Left cardiac atrium (tissue), 4 donors: ENCODE measurements at regions of chr11 and their contacts with region 1.

Region 1: GRCh38 chr11:7442588-7443215 is 42.6 kb upstream of the OLFML1 start:
- DNase-seq: peak; percentile 67
- ATAC-seq: peak in 1 of 2 donors; percentile 70

Region 2: GRCh38 chr11:7098235-7098832 is 344.4 kb before region 1 on chr11:
- intact Hi-C with region 1: loop called in 1 of 2 experiments (anchors 2 kb)
- DNase-seq: no peak
- ATAC-seq: peak; percentile 41 to 52

Region 3: GRCh38 chr11:7143908-7144307 is 298.8 kb before region 1 on chr11:
- intact Hi-C with region 1: loop called (anchors 5 to 10 kb)
- DNase-seq: no peak
- ATAC-seq: no peak

Region 4: DNA sequence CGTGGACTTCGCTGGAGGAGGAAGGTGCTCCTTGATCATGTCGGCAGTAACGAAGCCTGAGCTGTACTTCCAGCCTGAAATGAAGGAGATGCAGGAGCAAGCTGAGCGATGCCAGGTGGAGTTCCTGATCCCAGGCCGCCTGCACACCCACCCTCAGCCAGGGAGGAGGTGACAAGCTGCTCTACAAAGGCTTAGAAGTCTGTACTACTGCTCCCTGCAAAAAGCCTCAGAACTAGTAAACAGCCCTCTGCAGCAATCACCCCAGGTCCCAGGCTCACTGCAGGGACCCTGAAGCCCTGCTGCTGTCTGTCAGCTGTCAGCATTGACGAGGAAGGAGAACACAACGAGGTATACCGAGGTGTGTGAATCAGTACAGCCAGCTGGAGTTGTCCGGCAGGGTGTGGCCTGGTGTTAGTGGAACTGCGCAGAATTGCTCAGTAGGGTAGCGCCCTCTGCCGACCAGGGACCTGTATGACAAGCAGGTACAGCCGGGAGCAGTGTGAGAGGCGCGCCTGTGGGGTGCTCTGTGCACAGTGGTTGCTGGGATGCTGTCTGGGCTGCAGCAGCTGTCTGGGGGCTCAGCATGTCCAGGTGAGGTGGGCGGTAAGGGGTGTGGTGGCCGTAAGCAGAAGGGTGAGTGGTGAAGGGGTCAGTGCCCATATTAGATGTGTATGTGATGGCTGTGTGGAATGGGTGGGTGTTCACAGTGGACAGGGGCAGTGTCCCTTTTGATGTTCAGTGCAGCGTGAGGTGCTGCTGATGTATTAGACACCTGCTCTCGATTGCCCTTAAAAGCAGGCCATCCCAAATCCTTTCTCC is 223.0 kb after region 1 on chr11:
- intact Hi-C with region 1: loop called in 1 of 2 experiments (anchors 10 kb)
- DNase-seq: peak; percentile 80
- ATAC-seq: peak; percentile 95 to 97